ENCODE measurements at regions of chr13 and their contacts with region 1.

Region 1: GRCh38 chr13:75299913-75300862 is 181.8 kb downstream of the TBC1D4 start:
- DNase-seq: no peak
- ATAC-seq: peak; percentile 72
- H3K4me3 ChIP-seq: no peak overlapping the region
- H3K4me3 Mint-ChIP-seq: peak overlapping the region in 4 of 10 donors; percentile 12 to 51 (median 22)
- H3K27ac ChIP-seq: no peak overlapping the region
- H3K27ac Mint-ChIP-seq: peak overlapping the region in 8 of 9 donors; percentile 20 to 79 (median 60)
- H3K4me1 ChIP-seq: peaks cover 0 to 25% of the 10 kb centered on the region in 2 donors
- H3K4me1 Mint-ChIP-seq: peaks cover 14 to 56% (median 44%) of the 10 kb centered on the region in 7 donors
- H3K27me3 ChIP-seq: no peaks in the 10 kb centered on the region
- H3K27me3 Mint-ChIP-seq: no peaks in the 10 kb centered on the region

Region 2: GRCh38 chr13:73578251-73578875 is 1721.8 kb before region 1 on chr13:
- CTCF ChIA-PET with region 1: no interaction called
- POLR2A ChIA-PET with region 1: no interaction called
- intact Hi-C with region 1: no loop called
- DNase-seq: no peak
- ATAC-seq: no peak
- H3K4me3 ChIP-seq: no peak overlapping the region
- H3K4me3 Mint-ChIP-seq: no peak overlapping the region
- H3K27ac ChIP-seq: no peak overlapping the region
- H3K27ac Mint-ChIP-seq: no peak overlapping the region
- H3K4me1 ChIP-seq: no peaks in the 10 kb centered on the region
- H3K4me1 Mint-ChIP-seq: peaks cover 0 to 5% (median 0%) of the 10 kb centered on the region in 7 donors
- H3K27me3 ChIP-seq: no peaks in the 10 kb centered on the region
- H3K27me3 Mint-ChIP-seq: peaks cover 0 to 3% (median 0%) of the 10 kb centered on the region in 5 donors

Region 3: DNA sequence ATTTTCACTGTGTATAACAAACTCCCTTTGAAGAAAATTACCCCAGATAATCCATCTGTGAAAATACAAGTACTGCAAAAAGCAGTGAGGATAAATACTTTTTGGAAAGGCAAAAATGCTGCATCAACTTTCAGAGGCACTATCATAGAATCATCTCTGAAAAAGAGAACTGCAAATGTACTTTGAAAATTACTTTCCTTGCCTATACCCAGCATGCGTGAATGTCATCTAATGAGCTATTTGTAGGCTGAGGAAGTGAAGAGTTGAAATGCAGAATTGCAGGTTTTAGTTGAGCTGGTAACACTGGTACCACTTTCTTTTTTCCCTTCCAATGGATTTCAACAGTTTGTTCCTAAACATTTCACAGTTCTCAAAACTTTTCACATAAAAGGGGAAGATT is 14.9 kb before region 1 on chr13:
- CTCF ChIA-PET with region 1: no interaction called
- POLR2A ChIA-PET with region 1: no interaction called
- intact Hi-C with region 1: no loop called
- DNase-seq: no peak
- ATAC-seq: no peak
- H3K4me3 ChIP-seq: no peak overlapping the region
- H3K4me3 Mint-ChIP-seq: no peak overlapping the region
- H3K27ac ChIP-seq: no peak overlapping the region
- H3K27ac Mint-ChIP-seq: no peak overlapping the region
- H3K4me1 ChIP-seq: no peaks in the 10 kb centered on the region
- H3K4me1 Mint-ChIP-seq: peaks cover 0 to 3% (median 0%) of the 10 kb centered on the region in 7 donors
- H3K27me3 ChIP-seq: no peaks in the 10 kb centered on the region
- H3K27me3 Mint-ChIP-seq: no peaks in the 10 kb centered on the region

Region 4: DNA sequence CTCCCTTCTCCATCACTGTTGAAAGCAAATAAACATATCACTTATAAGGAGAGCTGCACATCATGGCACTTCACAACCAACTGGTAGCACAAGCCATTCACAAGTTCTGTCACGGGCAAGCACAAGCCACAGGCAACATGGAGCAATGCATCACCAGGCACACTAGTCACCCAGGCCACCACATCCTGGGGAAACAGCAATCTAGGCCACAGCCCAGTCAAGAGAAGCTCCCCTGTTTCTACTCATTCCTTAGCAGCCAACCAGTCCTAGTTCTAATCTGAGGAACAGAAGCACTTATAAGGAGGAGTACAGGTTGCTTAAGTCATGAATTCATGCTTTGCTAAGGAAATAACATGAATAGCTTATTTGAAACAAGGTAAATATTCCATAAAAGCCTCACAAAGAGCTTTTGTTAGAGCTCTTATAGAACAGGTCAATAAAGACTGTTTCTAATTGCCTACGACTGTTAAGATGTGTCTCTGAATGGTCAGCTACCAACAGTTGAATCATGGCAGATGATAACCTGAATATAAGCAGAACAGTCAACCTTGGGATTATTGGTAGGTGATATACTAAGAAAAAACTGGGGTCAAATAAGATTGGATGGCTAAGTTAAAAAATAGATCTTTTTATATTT is 12.8 kb after region 1 on chr13:
- CTCF ChIA-PET with region 1: no interaction called
- POLR2A ChIA-PET with region 1: interaction called, 6 read pairs
- intact Hi-C with region 1: loop called in 1 of 2 experiments (anchors 2 kb)
- DNase-seq: peak in 1 of 9 donors; percentile 47
- ATAC-seq: peak; percentile 38
- H3K4me3 ChIP-seq: no peak overlapping the region
- H3K4me3 Mint-ChIP-seq: peak overlapping the region in 1 of 10 donors; percentile 35
- H3K27ac ChIP-seq: no peak overlapping the region
- H3K27ac Mint-ChIP-seq: peak overlapping the region in 3 of 9 donors; percentile 43 to 76 (median 65)
- H3K4me1 ChIP-seq: peaks cover 8 to 15% of the 10 kb centered on the region in 2 donors
- H3K4me1 Mint-ChIP-seq: peaks cover 6 to 37% (median 29%) of the 10 kb centered on the region in 7 donors
- H3K27me3 ChIP-seq: no peaks in the 10 kb centered on the region
- H3K27me3 Mint-ChIP-seq: no peaks in the 10 kb centered on the region